ENCODE measurements at regions of chr4 and their contacts with region 1.

Region 1: DNA sequence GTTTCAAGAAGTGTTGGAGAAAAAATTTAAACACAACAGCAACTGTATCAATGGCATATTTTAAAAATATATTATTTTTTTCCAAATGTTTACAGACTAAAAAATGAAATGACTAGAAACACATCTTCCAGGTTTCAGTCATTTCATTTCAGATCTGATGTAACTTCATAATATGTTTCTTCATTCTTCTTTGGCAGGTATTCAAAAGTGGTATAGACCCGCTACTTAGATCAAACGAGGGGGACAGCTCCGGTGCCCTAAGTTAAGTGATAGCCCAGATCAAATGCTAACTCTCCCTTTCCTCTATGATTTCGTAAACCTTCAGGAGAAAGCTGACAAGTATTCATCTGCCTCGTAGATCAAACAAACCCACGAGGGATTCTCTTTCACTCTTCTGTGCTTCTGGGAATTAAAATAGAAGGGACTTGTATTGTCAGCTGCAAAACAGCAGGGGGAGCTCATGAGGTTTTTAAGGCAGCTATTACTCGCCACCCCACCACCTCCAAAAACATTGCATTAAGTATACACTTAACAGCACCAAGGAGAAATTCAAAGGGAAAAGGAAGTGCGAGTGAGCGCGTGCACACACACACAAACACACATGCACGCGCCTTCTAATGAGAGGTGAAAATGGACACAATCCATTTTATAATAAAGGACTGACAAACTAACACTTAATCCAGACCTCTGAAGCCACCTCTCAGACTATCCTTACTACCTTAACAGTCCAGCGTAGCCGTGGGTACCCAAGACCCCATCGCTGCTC is 21.4 kb downstream of the HELT start:
- DNase-seq: peak in 4 of 5 donors; percentile 31 to 66 (median 46)
- H3K4me3 ChIP-seq: no peak overlapping the region
- H3K27ac ChIP-seq: no peak overlapping the region
- H3K4me1 ChIP-seq: no peaks in the 10 kb centered on the region
- H3K27me3 ChIP-seq: no peaks in the 10 kb centered on the region
- CTCF ChIP-seq: peak; percentile 63 to 80 (median 75)
- EP300 ChIP-seq: no peak
- POLR2A ChIP-seq: no peak

Region 2: DNA sequence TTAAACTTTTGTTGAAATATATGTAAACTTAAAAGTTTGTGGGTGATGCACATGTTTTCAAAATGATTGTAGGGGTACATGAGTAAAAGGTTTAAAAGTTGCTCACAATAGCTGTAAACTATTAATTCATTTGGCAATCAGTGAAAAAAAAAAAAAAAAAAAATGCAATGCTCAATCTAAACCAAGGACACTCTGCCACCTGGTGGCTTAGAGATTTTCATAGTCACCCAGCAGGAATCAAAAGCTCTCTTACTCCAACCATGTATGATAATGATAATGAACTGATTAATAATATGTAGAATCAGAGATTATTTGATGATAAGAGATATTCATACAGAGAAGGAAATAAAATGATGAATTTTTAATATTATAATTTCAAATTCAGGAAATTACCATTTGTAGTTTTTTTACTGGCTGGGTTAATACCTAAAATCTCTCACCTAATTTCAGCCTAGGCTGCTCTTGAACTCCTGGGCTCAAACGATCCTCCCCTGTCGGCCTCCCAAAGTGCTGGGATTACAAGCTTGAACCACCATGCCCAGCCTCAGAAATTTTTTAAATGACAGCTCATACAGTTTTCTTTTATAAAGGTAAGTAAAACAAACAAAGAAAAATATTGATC is 56.5 kb after region 1 on chr4:
- intact Hi-C with region 1: loop called in 3 of 4 experiments (anchors 5 to 10 kb)
- DNase-seq: peak in 3 of 5 donors; percentile 24 to 60 (median 31)
- H3K4me3 ChIP-seq: no peak overlapping the region
- H3K27ac ChIP-seq: no peak overlapping the region
- H3K4me1 ChIP-seq: no peaks in the 10 kb centered on the region
- H3K27me3 ChIP-seq: no peaks in the 10 kb centered on the region
- CTCF ChIP-seq: peak in 2 of 3 donors; percentile 21 to 57
- EP300 ChIP-seq: no peak
- POLR2A ChIP-seq: no peak

Region 3: DNA sequence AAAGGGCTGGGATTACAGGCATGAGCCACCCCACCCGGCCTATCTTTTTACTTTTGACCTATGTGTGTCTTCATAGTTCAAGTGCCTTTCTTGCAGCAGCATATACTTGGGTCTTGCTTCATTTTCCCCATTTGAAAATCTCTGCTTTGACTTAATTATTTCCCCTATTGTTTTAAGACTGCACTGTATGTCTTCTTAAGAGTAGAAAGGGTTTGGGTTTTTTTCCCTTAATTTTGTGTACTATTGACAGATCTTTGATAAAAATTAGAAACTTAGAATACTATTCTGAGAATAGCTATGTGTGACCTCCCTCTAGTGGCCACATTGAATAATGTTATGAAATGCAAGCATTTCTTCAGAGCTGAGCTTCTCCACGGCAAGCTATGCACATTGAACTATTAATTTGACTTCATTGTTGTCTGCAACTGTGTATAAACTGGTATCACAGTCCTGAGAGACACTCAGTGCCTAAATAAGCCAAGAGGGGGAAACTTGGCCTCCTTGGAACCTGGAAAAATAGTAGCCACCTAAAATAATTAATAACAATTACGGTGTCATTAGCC is 94.7 kb after region 1 on chr4:
- intact Hi-C with region 1: loop called in 1 of 4 experiments (anchors 5 kb)
- DNase-seq: no peak
- H3K4me3 ChIP-seq: no peak overlapping the region
- H3K27ac ChIP-seq: no peak overlapping the region
- H3K4me1 ChIP-seq: peaks cover 4% of the 10 kb centered on the region
- H3K27me3 ChIP-seq: no peaks in the 10 kb centered on the region
- CTCF ChIP-seq: peak; percentile 75 to 86 (median 80)
- EP300 ChIP-seq: no peak
- POLR2A ChIP-seq: no peak

Region 4: DNA sequence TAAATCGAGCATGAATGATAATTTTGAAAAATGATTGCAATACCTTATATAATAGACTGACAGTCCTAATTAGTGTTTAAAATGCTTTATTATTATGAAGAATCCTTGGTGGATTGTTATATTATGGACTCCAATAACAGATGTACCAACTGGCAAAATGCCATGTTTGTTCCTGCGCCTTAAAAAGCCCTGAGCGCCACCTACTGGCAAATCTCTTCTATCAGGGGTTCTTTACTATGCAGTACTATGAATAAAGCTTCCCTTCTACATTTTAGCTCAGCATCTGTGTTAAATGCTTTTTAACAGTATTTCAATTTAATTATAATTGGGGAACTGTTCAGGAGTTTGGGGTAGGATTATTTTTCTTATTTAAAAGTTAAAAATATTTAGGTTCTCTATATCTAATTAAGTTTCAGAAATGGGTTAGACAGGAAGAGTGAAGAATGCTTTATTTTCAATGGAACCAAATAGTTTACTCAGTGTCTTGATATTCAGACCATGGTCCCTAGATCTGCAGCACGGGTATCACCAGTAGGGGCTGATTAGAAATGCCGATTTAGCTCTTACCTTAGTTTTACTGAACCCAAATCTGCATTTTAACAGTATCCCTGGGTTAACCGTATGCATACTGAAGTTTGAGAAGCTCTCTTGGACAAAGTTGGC is 144.1 kb after region 1 on chr4:
- intact Hi-C with region 1: loop called in 1 of 4 experiments (anchors 5 kb)
- DNase-seq: peak; percentile 70 to 90 (median 79)
- H3K4me3 ChIP-seq: no peak overlapping the region
- H3K27ac ChIP-seq: no peak overlapping the region
- H3K4me1 ChIP-seq: peaks cover 1% of the 10 kb centered on the region
- H3K27me3 ChIP-seq: no peaks in the 10 kb centered on the region
- CTCF ChIP-seq: peak; percentile 66 to 77 (median 67)
- EP300 ChIP-seq: no peak
- POLR2A ChIP-seq: no peak

Measured in ovary (tissue), 10 donors.